Sciatic nerve (tissue), 2 donors: ENCODE measurements at regions of chr14 and their contacts with region 1.

Region 1: DNA sequence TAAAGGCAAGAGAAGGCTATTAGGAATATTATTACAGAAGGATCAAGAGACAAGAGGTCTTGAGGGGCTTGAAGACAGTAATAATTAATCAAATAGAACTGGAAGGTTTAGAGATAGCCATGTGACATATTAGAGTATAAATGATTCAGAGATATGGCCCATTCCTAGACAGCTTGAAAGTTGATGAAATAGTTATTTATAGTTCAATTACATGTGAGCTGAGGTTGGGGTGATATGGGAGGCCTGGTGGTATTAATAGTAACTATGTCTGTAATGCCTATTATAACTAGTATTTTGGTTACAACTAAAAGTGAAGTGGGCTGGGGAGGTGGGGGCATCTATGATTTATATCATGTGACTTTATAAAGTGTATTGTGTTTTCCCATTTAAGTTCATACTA is 14.1 kb upstream of the MIS18BP1 start:
- DNase-seq: no peak
- ATAC-seq: no peak

Region 2: GRCh38 chr14:44912041-44912869 is 354.8 kb before region 1 on chr14:
- intact Hi-C with region 1: loop called (anchors 10 kb)
- DNase-seq: no peak
- ATAC-seq: peak; percentile 60